HCT116 (cell line): ENCODE measurements at regions of chr2 and their contacts with region 1.

Region 1: DNA sequence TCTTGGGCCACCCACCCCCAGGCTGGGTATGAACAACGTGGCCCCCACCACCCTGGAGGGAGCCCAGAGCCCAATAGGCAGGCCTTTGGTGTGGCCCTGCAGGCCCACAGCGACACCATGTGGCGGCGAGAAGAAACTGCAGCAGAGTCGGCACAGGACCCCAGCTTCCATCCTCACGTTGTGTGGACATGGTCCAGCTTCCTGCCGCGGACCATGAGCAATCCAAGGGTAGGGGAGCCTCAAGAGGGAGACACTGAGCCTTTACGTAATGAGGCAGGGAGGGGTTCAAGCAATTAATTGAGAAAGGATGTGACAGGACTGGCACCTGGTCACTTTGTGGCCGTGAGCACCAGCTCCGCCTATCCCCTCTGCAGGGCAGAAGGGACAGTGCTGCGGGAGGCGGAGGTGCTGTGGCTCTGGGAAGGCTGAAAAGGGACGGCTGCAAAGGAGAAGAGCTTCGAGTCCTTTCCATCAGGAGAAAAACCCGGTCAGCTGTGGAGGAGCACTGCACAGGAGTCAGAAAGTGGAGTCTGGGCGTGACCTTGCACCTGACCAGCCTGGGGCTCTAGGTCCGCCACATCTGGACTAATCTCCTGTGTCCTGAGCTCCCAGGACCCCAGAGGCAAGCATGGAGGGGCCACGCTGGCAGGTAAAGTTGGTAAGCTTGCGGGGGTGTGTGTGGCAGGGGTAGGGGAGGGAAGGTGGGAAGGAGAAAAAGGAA is 44.8 kb downstream of the TMEM37 start:
- DNase-seq: peak; percentile 78
- ATAC-seq: peak; percentile 95
- H3K4me3 ChIP-seq: peak overlapping the region in 1 of 2 experiments; percentile 29; a peak in 2 of 4 replicates
- H3K27ac ChIP-seq: no peak overlapping the region
- H3K4me1 ChIP-seq: peaks cover 0 to 7% of the 10 kb centered on the region in 2 experiments; a peak in 2 of 4 replicates
- H3K27me3 ChIP-seq: no peaks in the 10 kb centered on the region
- CTCF ChIP-seq: peak; percentile 97 to 98 (median 98)
- POLR2A ChIP-seq: no peak
- RAD21 ChIP-seq: peak; percentile 98

Region 2: GRCh38 chr2:119371111-119371510 is 105.3 kb before region 1 on chr2:
- CTCF ChIA-PET with region 1: no interaction called
- POLR2A ChIA-PET with region 1: no interaction called
- RAD21 ChIA-PET with region 1: no interaction called
- intact Hi-C with region 1: no loop called
- DNase-seq: no peak
- ATAC-seq: no peak
- H3K4me3 ChIP-seq: no peak overlapping the region
- H3K27ac ChIP-seq: no peak overlapping the region
- H3K4me1 ChIP-seq: peaks cover 6 to 8% of the 10 kb centered on the region in 2 experiments
- H3K27me3 ChIP-seq: no peaks in the 10 kb centered on the region
- CTCF ChIP-seq: no peak
- POLR2A ChIP-seq: no peak
- RAD21 ChIP-seq: no peak

Region 3: DNA sequence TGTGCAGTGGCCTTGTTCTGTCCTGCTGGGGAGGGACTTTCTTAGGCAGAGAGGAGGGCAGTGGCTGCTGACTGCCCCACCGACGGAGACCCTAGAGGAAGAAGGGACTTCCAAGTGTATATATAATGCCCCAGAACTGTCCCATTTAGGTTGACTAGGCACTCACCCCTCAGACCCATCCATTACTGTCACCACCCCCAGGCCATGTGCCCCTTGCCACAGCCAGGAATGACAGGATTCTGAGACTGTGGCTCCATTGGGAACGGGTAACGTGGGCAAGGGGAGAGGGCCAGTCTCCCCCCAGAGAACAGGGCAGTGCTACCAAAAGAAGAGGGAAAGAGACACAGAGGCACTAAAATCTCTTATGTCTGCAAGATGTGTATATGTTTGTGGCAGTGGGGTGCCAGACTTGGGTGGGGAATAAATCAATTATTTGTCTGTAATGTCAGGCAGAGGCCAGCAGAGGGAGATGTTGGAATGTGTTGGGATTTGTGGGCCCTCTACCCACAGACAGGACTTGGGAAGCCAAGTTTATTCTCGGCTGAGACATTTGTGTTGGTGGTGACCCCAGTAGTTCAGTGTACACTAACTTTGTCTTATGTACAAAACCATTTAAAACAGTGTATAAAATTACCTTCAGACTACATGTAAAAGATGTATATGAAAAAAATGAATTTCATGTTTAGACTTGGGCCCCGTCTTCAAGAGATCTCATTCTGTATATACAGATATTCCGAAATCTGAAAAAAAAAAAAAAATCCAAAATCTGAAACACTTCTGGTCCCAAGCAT is 68.8 kb before region 1 on chr2:
- CTCF ChIA-PET with region 1: interaction called, 16 read pairs
- POLR2A ChIA-PET with region 1: no interaction called
- RAD21 ChIA-PET with region 1: no interaction called
- intact Hi-C with region 1: loop called (anchors 1 kb)
- DNase-seq: peak; percentile 52
- ATAC-seq: peak; percentile 90
- H3K4me3 ChIP-seq: no peak overlapping the region
- H3K27ac ChIP-seq: no peak overlapping the region
- H3K4me1 ChIP-seq: no peaks in the 10 kb centered on the region
- H3K27me3 ChIP-seq: no peaks in the 10 kb centered on the region
- CTCF ChIP-seq: peak; percentile 62 to 95 (median 82)
- POLR2A ChIP-seq: no peak
- RAD21 ChIP-seq: peak; percentile 96

Region 4: GRCh38 chr2:119488245-119489214 is 12.1 kb after region 1 on chr2:
- CTCF ChIA-PET with region 1: interaction called, 10 read pairs
- POLR2A ChIA-PET with region 1: no interaction called
- RAD21 ChIA-PET with region 1: no interaction called
- intact Hi-C with region 1: no loop called
- DNase-seq: no peak
- ATAC-seq: peak; percentile 63; the same call in 1 of the 2 replicates
- H3K4me3 ChIP-seq: no peak overlapping the region
- H3K27ac ChIP-seq: no peak overlapping the region
- H3K4me1 ChIP-seq: peaks cover 11 to 12% of the 10 kb centered on the region in 2 experiments
- H3K27me3 ChIP-seq: no peaks in the 10 kb centered on the region
- CTCF ChIP-seq: peak; percentile 12 to 30 (median 21); a peak in 3 of 6 replicates
- POLR2A ChIP-seq: no peak
- RAD21 ChIP-seq: 0 out of 2 replicates have a peak, but pooled peaks have one; percentile 8

Region 5: DNA sequence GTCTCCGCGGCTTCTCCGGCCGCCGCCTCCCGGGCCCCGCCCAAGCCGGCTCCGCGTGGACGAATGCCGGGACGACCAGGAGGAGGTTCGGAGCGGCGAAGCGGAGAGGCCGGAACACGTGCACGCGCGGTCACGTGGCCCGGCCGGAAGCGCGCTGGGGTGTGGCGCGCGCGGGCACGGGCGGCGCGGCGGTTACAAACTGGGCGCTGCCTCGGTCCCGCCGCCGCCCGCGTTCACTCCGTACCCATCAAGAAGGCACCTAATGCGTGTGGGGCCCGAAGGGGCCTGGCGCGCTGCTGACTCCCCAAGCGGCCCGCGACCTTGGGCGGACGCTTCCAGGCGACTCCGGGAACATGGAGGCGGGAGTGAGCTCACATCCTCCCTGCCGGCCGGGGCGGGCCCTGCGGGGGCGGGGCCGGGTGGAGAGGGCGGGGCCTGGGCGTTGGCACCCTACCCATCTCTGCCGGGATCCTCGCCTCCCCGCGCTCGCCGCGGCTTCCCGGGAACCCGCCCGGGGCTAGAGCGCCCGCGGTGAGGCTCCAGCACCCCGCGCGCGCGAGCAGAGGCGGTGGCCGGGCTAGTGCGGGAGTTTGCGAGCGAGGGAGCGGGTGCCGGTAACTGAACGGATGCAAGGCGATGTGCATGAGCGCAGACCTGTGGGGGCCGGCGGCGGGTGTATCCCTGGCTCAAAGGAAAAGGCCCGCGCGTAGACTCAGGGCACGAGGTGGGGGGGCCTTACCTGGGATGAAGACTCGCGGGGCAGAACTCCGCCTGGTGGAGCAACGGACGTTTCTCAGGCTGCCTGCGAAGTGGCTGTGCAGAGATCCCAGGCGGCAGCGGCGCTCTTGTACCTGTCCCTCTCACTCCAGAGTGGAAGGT is 746.8 kb after region 1 on chr2 and contains the start of gene TMEM185B:
- CTCF ChIA-PET with region 1: no interaction called
- POLR2A ChIA-PET with region 1: no interaction called
- RAD21 ChIA-PET with region 1: no interaction called
- intact Hi-C with region 1: no loop called
- DNase-seq: peak; percentile 62
- ATAC-seq: peak; percentile 92
- H3K4me3 ChIP-seq: peak within 1 kb of the TSS; percentile 58 to 65
- H3K27ac ChIP-seq: peak within 1 kb of the TSS; percentile 85
- H3K4me1 ChIP-seq: peaks cover 6 to 30% of the 10 kb centered on the region in 2 experiments; a peak in 3 of 4 replicates
- H3K27me3 ChIP-seq: no peaks in the 10 kb centered on the region
- CTCF ChIP-seq: peak in 2 of 3 experiments; percentile 43 to 52; a peak in 4 of 6 replicates
- POLR2A ChIP-seq: peak; percentile 43
- RAD21 ChIP-seq: peak; percentile 45
- total RNA-seq, gene TMEM185B: 27.1 TPM